Activated CD4-positive, alpha-beta memory T cell treated with anti-CD3 and anti-CD28 coated beads, Interleukin-2, amount 10 ng/mL, durations not matched to agents 7 days and 5 days (primary cell): ENCODE measurements at regions of chr18 and their contacts with region 1.

Region 1: GRCh38 chr18:23994361-23994902 is 20.1 kb upstream of the TTC39C start:
- DNase-seq: no peak
- H3K4me3 Mint-ChIP-seq: peak overlapping the region; percentile 59
- H3K27ac Mint-ChIP-seq: peak overlapping the region; percentile 64
- H3K4me1 Mint-ChIP-seq: peaks cover 65% of the 10 kb centered on the region
- H3K27me3 Mint-ChIP-seq: peaks cover 2% of the 10 kb centered on the region

Region 2: GRCh38 chr18:23938043-23938756 is 56.2 kb before region 1 on chr18:
- CTCF ChIA-PET with region 1: no interaction called
- POLR2A ChIA-PET with region 1: interaction called, 15 read pairs
- DNase-seq: peak; percentile 61
- H3K4me3 Mint-ChIP-seq: no peak overlapping the region
- H3K27ac Mint-ChIP-seq: peak overlapping the region; percentile 61
- H3K4me1 Mint-ChIP-seq: peaks cover 66% of the 10 kb centered on the region
- H3K27me3 Mint-ChIP-seq: peaks cover 33% of the 10 kb centered on the region

Region 3: GRCh38 chr18:24051031-24051947 is 56.9 kb after region 1 on chr18:
- CTCF ChIA-PET with region 1: no interaction called
- POLR2A ChIA-PET with region 1: no interaction called
- DNase-seq: no peak
- H3K4me3 Mint-ChIP-seq: no peak overlapping the region
- H3K27ac Mint-ChIP-seq: peak overlapping the region; percentile 23
- H3K4me1 Mint-ChIP-seq: peaks cover 66% of the 10 kb centered on the region
- H3K27me3 Mint-ChIP-seq: no peaks in the 10 kb centered on the region

Region 4: DNA sequence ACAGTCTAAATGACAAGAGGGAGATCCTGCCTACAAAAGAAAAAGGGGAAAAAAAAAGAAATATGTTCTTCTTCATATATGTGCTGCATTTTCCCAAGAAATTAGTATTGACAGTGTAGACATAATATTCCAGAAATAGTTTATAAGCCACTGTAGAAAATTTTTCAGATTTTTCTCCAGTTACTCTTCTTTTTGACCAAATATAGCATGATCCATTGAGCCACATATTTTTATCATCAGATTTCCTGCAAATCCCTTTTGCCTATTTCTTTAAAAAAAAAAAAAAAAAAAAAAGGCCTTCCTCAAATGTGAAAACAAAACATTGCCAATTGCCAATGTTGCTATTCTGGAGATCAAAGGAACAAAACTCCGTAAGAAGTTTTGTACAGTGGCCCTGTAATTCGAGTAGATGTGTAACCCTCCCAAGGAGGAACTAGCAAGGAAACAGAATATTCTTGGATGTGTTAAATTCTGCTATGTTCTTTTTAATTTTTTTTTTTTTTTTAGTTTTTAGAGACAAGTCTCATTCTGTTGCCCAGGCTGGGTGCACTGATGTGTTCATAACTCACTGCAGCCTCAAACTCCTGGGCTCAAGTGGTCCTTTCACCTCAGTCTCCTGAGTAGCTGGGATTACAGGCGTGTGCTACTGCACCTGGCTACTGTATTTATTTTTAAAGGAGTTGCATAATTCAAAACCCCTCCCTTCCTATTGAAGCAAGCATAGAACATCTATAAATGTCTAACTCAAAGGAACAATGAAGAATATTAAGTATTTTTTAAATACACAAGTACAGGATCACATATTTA is 131.9 kb after region 1 on chr18:
- CTCF ChIA-PET with region 1: no interaction called
- POLR2A ChIA-PET with region 1: no interaction called
- DNase-seq: no peak
- H3K4me3 Mint-ChIP-seq: no peak overlapping the region
- H3K27ac Mint-ChIP-seq: no peak overlapping the region
- H3K4me1 Mint-ChIP-seq: no peaks in the 10 kb centered on the region
- H3K27me3 Mint-ChIP-seq: no peaks in the 10 kb centered on the region